ENCODE measurements at regions of chr10 and their contacts with region 1.

Region 1: DNA sequence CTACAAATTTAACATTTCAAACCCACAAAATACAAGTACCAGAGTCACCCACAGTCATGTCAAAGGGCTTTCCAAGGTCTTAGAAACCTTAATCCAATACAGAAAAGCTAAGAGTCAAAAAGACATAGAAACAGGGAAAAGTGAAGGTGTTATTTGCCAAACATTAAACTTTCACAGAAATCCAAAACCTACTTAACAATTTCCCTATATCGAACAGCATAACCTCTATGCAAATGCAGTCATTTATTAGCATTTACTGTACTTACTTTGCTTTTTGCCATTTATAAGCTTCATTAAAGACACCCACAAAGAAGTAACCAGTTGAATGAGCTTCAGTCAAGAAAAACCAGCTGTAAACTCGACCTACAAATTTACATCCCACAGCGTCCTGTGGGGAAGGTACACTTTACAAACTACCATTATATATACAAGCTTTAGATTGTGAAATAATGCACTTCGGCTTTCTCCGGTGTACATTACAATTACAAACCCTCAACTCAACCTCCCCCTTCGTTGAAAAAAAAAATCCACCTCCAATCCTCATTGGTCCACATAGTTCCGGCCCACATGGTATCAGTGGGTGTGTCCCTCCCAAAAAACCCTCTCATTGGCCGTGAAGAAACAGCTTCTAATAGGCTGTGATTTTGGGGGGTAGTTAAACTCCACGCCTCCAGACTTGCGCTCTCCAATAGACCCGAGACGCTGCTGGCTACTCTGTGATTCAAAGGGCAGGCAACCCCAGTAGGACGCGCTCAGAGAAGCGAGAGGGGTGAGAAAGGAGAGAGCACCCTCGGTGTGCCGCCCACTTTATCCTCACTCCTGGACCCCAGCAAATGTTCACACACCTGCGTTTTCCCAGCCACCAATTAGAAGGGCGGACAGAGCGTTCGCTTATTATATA is 1.4 kb downstream of the PANK1 start:
- DNase-seq: peak; percentile 80
- H3K4me3 ChIP-seq: peak overlapping the region; percentile 73
- CTCF ChIP-seq: no peak

Region 2: GRCh38 chr10:89659143-89660131 is 15.8 kb after region 1 on chr10:
- CTCF ChIA-PET with region 1: interaction called, 4 read pairs
- POLR2A ChIA-PET with region 1: interaction called, 11 read pairs
- DNase-seq: peak; percentile 70
- H3K4me3 ChIP-seq: no peak overlapping the region
- CTCF ChIP-seq: no peak

Region 3: DNA sequence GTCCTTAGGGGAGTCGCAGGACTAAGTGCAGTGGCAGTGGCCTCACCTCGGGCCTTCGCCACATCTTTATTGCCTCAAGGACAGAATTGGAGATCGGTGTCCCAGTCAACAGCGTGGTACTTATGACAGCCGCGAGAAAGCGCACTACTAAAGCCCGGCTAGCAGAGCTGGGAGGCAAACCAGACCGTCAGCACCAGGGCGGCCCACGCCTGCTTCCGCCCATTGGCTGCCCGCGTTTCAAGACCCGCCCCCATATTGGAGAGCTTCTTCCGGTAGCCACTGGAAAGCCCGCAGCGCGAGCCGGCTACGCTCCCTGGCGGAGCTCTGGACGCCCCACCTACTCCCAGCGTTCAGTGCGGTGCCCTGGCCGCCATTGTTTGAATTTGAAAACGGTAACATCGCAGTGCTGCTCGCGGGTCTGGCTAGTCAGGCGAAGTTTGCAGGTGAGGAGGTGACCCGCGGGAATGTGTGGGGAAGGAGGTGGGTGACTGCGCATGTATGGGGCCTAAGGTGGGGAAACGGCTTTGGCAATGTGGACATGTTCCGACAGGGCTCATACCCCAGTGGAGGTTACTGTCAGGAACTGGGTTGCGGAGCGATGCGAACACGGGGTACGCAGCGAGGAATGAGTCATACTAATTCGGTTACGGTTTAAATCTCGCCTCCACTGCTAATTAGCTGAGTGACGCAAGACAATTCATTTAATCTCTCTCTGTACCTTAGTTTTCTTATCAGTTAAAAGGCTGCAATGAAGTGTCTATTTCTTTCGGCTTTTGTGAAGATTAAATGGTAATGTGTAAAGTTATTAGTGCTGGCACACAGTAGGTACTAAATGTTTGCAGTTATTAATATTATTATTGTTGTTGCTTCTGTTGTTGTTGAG is 57.8 kb after region 1 on chr10 and contains the start of gene KIF20B:
- CTCF ChIA-PET with region 1: no interaction called
- POLR2A ChIA-PET with region 1: interaction called, 11 read pairs
- DNase-seq: peak; percentile 73
- H3K4me3 ChIP-seq: peak within 1 kb of the TSS; percentile 99
- CTCF ChIP-seq: peak; percentile 54

Measured in AG04449 (cell line).